CD8-positive, alpha-beta T cell (primary cell): ENCODE measurements at regions of chr15 and their contacts with region 1.

Region 1: DNA sequence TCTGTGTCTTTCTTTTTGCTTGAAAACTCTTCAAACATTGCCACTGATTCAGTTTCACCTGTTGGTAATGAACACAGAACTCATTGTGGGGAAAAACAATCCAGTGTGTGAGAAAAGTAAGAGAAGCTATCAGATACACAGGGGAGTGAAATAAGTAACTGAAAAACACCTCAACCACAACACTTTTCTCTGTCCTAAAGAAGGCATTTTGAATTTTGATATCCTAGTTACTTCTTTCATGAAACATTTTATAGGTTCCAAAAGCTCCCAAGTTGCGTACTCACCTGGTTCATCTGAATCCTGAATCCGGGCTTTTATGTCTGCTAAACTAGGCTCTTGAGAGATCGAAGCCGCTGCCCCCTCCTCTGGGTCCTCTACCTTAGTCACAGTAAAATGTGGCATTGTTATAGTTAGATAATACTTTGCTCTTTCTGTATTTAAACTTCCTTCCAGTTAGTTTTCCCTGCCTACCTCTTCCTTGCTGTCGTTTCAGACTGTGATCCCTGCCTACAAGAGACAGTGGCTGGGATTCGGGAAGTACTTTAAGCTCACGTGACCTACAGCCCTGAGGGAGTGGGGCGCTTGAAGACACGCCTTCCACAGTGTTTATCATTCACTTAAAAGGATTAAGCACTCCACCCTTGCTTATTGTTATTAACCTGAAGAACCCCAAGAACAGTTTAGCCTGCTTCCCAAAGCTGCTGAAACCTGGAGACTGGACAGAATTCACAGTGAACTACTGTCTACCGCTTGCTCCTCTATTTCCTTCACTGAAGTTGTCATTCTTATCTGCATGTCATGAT is 19.1 kb downstream of the SLC12A6 start:
- DNase-seq: peak in 4 of 9 experiments; percentile 35 to 62 (median 42)
- ATAC-seq: peak; percentile 72
- H3K4me3 ChIP-seq: peak overlapping the region; percentile 43 to 63
- H3K4me3 Mint-ChIP-seq: peak overlapping the region; percentile 94
- H3K27ac ChIP-seq: peak overlapping the region; percentile 39 to 58
- H3K27ac Mint-ChIP-seq: peak overlapping the region; percentile 97
- H3K4me1 ChIP-seq: peaks cover 46% of the 10 kb centered on the region
- H3K4me1 Mint-ChIP-seq: peaks cover 62% of the 10 kb centered on the region
- H3K27me3 ChIP-seq: no peaks in the 10 kb centered on the region
- H3K27me3 Mint-ChIP-seq: no peaks in the 10 kb centered on the region
- CTCF ChIP-seq: no peak

Region 2: GRCh38 chr15:34203936-34204335 is 114.5 kb before region 1 on chr15:
- CTCF ChIA-PET with region 1: no interaction called
- POLR2A ChIA-PET with region 1: no interaction called
- intact Hi-C with region 1: no loop called
- DNase-seq: no peak
- ATAC-seq: no peak
- H3K4me3 ChIP-seq: no peak overlapping the region
- H3K4me3 Mint-ChIP-seq: no peak overlapping the region
- H3K27ac ChIP-seq: no peak overlapping the region
- H3K27ac Mint-ChIP-seq: no peak overlapping the region
- H3K4me1 ChIP-seq: peaks cover 8% of the 10 kb centered on the region
- H3K4me1 Mint-ChIP-seq: peaks cover 31% of the 10 kb centered on the region
- H3K27me3 ChIP-seq: no peaks in the 10 kb centered on the region
- H3K27me3 Mint-ChIP-seq: no peaks in the 10 kb centered on the region
- CTCF ChIP-seq: no peak

Region 3: GRCh38 chr15:34275154-34275553 is 43.3 kb before region 1 on chr15:
- CTCF ChIA-PET with region 1: no interaction called
- POLR2A ChIA-PET with region 1: no interaction called
- intact Hi-C with region 1: loop called in 1 of 2 experiments (anchors 5 kb)
- DNase-seq: no peak
- ATAC-seq: no peak
- H3K4me3 ChIP-seq: no peak overlapping the region
- H3K4me3 Mint-ChIP-seq: no peak overlapping the region
- H3K27ac ChIP-seq: no peak overlapping the region
- H3K27ac Mint-ChIP-seq: no peak overlapping the region
- H3K4me1 ChIP-seq: no peaks in the 10 kb centered on the region
- H3K4me1 Mint-ChIP-seq: peaks cover 25% of the 10 kb centered on the region
- H3K27me3 ChIP-seq: no peaks in the 10 kb centered on the region
- H3K27me3 Mint-ChIP-seq: no peaks in the 10 kb centered on the region
- CTCF ChIP-seq: no peak

Region 4: DNA sequence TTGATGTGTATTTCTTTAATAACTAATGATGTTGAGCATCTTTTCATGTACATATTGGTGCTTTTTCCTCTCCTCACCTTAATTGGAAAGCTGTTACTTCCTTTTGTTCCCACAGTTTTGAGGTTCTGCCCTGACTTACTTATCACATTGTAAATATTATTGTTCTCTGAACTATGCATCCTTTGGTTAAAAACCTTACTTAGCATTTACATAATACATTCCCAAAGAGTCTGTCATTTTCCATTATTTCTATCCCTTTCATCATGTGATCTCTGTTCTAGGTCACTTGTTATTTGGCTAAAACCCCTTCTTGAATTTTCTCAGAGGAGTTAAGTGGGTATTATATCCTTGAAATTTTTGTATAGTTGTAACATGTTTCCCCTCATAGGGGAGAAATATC is 13.9 kb before region 1 on chr15:
- CTCF ChIA-PET with region 1: no interaction called
- POLR2A ChIA-PET with region 1: no interaction called
- intact Hi-C with region 1: loop called in 1 of 2 experiments (anchors 1 kb)
- DNase-seq: no peak
- ATAC-seq: no peak
- H3K4me3 ChIP-seq: no peak overlapping the region
- H3K4me3 Mint-ChIP-seq: no peak overlapping the region
- H3K27ac ChIP-seq: no peak overlapping the region
- H3K27ac Mint-ChIP-seq: no peak overlapping the region
- H3K4me1 ChIP-seq: no peaks in the 10 kb centered on the region
- H3K4me1 Mint-ChIP-seq: peaks cover 60% of the 10 kb centered on the region
- H3K27me3 ChIP-seq: no peaks in the 10 kb centered on the region
- H3K27me3 Mint-ChIP-seq: no peaks in the 10 kb centered on the region
- CTCF ChIP-seq: no peak

Region 5: GRCh38 chr15:34331809-34332208 is 13.3 kb after region 1 on chr15:
- CTCF ChIA-PET with region 1: interaction called, 9 read pairs
- POLR2A ChIA-PET with region 1: interaction called, 23 read pairs
- intact Hi-C with region 1: loop called (anchors 1 to 2 kb)
- DNase-seq: peak in 2 of 9 experiments; percentile 61 to 74
- ATAC-seq: peak; percentile 64
- H3K4me3 ChIP-seq: no peak overlapping the region
- H3K4me3 Mint-ChIP-seq: peak overlapping the region; percentile 23
- H3K27ac ChIP-seq: peak overlapping the region in 1 of 2 experiments; percentile 62
- H3K27ac Mint-ChIP-seq: peak overlapping the region; percentile 80
- H3K4me1 ChIP-seq: peaks cover 86% of the 10 kb centered on the region
- H3K4me1 Mint-ChIP-seq: peaks cover 83% of the 10 kb centered on the region
- H3K27me3 ChIP-seq: no peaks in the 10 kb centered on the region
- H3K27me3 Mint-ChIP-seq: no peaks in the 10 kb centered on the region
- CTCF ChIP-seq: no peak

Region 6: GRCh38 chr15:34337557-34338306 is 19.3 kb after region 1 on chr15 and contains the start of gene SLC12A6:
- CTCF ChIA-PET with region 1: interaction called, 8 read pairs
- POLR2A ChIA-PET with region 1: interaction called, 19 read pairs
- intact Hi-C with region 1: loop called (anchors 1 to 2 kb)
- DNase-seq: peak; percentile 81 to 95 (median 89)
- ATAC-seq: peak; percentile 84
- H3K4me3 ChIP-seq: peak within 1 kb of the TSS; percentile 81 to 97
- H3K4me3 Mint-ChIP-seq: peak within 1 kb of the TSS; percentile 98
- H3K27ac ChIP-seq: peak within 1 kb of the TSS; percentile 75 to 80
- H3K27ac Mint-ChIP-seq: peak within 1 kb of the TSS; percentile 97
- H3K4me1 ChIP-seq: peaks cover 55% of the 10 kb centered on the region
- H3K4me1 Mint-ChIP-seq: peaks cover 61% of the 10 kb centered on the region
- H3K27me3 ChIP-seq: no peaks in the 10 kb centered on the region
- H3K27me3 Mint-ChIP-seq: no peaks in the 10 kb centered on the region
- CTCF ChIP-seq: no peak
- total RNA-seq, gene SLC12A6: 55.7 to 60.8 TPM